Aorta (tissue), 5 donors: ENCODE measurements at regions of chr19 and their contacts with region 1.

Region 1: DNA sequence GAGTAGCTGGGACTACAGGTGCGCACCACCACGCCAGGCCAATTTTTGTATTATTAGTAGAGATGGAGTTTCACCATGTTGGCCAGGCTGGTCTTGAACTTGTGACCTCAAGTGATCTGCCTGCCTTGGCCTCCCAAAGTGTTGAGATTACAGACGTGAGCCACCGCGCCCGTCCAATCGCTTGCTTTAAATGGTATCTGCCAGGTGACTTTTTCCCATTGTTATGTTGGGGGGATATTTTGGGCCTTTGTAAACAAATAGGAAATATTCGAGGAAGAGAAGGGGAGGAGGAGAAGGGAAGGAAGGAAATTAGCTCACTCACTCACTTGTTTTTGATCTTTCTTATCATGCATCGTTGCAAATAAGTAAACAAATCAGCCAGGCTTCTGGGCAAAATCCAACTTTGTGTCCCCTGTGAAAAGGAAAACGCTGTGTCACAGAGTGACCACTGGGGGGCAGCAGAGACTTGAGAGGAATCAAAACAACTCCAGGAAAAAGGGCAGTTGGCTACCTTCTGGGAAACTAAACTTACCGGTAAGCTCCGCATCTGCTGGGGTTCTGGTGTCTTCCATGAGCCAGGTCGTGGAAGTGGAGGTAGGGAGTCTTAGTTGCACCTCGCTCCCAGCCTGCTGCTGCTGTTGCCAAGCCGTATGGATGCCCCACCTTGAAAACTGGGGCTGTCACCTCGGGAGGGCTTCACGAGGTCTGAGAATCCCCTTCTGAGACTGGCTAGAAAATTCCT is 9.3 kb upstream of the RANBP3 start:
- DNase-seq: peak; percentile 85 to 86
- ATAC-seq: peak; percentile 79
- H3K4me3 ChIP-seq: peak overlapping the region; percentile 0 to 8
- H3K27ac ChIP-seq: no peak overlapping the region
- H3K4me1 ChIP-seq: peaks cover 0 to 3% of the 10 kb centered on the region in 2 donors
- H3K27me3 ChIP-seq: no peaks in the 10 kb centered on the region

Region 2: DNA sequence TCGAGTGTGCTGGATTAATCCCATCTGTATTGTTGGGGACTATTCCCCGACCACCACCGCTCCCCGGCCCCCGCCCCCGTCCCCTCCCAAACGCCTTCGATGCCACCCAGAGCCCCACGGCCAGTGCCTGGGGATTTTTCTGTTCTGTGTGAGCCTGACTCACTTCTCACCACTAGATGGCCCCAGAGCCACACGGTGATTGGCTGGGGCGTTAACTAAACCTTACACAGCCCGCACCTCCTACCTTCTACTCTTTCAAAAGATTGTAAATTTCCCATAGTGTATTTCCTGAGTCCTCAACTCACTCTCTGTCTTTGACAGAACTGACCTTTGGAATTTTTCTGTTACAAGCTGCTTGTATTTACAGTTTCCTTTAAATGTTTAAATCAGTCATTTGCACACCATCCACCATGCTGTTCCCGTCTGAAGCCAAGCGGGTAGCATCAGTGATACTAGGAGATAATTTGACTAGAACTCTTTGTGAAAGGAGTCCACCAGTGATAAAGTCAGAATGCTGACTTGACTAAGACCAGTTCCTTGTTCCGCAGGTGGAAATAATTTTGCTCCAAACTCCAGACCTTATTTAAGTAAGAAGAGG is 61.7 kb after region 1 on chr19:
- intact Hi-C with region 1: loop called in 1 of 2 experiments (anchors 5 kb)
- DNase-seq: peak; percentile 79 to 91
- ATAC-seq: peak; percentile 95
- H3K4me3 ChIP-seq: no peak overlapping the region
- H3K27ac ChIP-seq: no peak overlapping the region
- H3K4me1 ChIP-seq: no peaks in the 10 kb centered on the region
- H3K27me3 ChIP-seq: no peaks in the 10 kb centered on the region